Psoas muscle (tissue), 8 donors: ENCODE measurements at regions of chr16 and their contacts with region 1.

Region 1: DNA sequence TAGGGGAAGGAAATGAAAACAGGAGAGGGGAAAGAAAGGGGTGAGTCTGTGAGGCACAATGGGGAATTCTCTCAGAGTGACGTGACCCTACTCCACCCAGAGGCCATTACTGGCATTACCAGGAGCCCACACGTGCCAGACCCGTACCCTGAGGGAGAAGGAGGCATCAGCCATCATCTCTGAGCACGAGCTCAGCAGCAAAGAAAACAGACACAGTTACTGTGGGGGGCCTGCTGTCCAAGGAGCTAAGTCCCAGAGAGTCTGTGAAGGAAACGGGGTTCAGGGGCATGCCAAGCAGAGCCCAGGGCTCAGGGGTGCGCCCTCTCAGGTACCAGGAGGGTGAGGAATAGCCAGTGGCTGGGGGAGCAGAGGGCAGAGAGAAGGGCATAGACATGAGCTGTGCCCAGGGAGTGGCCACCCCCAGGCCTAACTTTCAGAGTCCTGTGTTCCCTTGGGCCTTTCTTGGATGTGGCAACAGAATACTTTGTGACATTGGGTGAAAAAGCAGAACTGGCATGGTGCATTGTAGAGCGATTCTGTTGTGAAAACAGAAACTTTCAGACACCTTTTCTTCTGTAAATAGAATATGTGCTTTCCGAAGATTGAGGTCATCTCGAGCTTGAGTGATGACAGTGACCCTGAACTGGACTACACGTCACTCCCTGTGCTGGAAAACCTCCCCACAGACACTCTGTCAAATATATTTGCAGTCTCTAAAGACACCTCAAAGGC is 11.3 kb downstream of the TAF1C start:
- DNase-seq: peak in 1 of 2 donors; percentile 57
- ATAC-seq: peak; percentile 62 to 88 (median 77)
- H3K4me3 ChIP-seq: no peak overlapping the region
- H3K27ac ChIP-seq: no peak overlapping the region
- H3K4me1 ChIP-seq: peaks cover 10% of the 10 kb centered on the region
- H3K27me3 ChIP-seq: no peaks in the 10 kb centered on the region
- CTCF ChIP-seq: peak; percentile 47

Region 2: DNA sequence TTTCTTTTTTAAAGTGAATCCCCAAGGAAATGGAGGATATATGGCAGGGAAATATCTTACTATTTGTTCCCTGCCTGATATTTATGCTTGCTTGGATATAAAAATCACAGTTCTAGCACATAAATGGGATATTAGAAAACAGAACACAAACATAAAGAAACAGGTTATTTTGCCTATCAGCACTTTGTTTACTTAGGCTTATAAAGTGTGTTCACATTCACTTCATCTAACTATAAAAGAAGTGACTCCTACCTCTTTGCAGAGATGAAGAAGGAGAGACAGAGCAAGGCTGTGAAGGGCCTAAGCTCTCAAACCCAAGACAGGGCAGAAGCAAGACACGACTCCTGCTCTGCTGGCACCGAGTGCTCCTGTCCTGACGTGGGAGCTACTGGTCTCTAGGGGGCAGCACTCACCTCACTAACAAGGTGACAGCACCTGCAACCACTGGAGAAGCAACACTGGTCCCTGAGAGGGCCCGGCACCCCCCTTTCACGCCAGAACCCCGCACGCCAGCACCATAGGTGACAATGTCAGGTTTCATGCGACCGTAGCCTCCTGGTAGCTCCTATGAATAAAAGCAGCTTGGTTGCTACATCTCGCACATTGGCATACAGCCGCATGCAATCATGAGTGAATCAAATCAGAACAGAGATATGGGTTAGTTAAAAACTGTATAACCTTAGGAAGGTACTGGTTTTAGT is 90.8 kb before region 1 on chr16:
- intact Hi-C with region 1: loop called in 1 of 2 experiments (anchors 5 kb)
- DNase-seq: peak; percentile 41 to 72
- ATAC-seq: peak; percentile 59 to 83 (median 72)
- H3K4me3 ChIP-seq: no peak overlapping the region
- H3K27ac ChIP-seq: no peak overlapping the region
- H3K4me1 ChIP-seq: peaks cover 10% of the 10 kb centered on the region
- H3K27me3 ChIP-seq: no peaks in the 10 kb centered on the region
- CTCF ChIP-seq: peak; percentile 65

Region 3: DNA sequence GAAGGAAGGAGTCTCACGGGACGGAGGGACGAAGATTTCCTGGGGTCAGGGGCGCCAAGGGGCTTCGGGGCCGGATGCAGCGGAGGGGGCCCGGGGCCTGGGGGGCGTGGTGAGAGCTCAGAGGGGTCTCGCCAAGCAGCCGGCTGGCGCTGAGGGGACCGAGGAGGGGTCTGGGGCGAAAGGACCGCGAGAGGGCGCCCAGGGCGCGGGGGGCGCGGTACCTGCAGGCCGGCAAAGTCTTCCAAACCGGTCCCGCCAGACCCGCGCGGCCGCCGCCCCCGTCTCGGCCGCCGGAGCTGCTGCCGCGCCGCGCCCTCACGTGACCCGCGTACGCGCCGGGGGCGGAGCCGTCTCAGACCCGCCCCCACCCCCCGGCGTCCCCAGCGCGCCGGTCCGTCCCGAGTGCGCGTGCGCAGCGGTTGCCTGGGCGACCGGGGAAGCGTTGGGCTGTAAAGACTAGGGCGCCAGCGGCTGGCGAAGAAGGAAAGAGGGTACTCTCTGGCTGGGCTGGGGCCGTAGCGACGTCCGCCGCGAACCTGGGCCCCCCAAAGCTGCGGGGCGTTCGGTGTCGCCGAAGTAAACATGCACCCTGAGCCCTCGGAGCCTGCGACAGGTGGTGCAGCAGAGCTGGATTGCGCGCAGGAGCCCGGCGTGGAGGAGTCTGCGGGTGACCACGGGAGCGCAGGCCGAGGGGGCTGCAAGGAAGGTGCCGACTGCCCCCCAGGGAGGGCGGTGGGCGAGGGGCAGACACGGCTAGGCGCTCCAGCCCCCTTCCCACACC is 30.5 kb before region 1 on chr16 and contains the starts of genes DNAAF1 and HSDL1:
- intact Hi-C with region 1: loop called (anchors 2 kb)
- DNase-seq: peak; percentile 92 to 95
- ATAC-seq: peak; percentile 94 to 98 (median 97)
- H3K4me3 ChIP-seq: peak within 1 kb of the TSS; percentile 95
- H3K27ac ChIP-seq: peak within 1 kb of the TSS; percentile 81
- H3K4me1 ChIP-seq: peaks cover 20% of the 10 kb centered on the region
- H3K27me3 ChIP-seq: no peaks in the 10 kb centered on the region
- CTCF ChIP-seq: no peak
- total RNA-seq, gene DNAAF1: not detected
- total RNA-seq, gene HSDL1: 12.4 to 24.4 (median 21.2) TPM

Region 4: GRCh38 chr16:84484579-84485254 is 309.2 kb after region 1 on chr16:
- intact Hi-C with region 1: loop called in 1 of 2 experiments (anchors 10 kb)
- DNase-seq: peak in 1 of 2 donors; percentile 51
- ATAC-seq: peak; percentile 57 to 85 (median 77)
- H3K4me3 ChIP-seq: no peak overlapping the region
- H3K27ac ChIP-seq: no peak overlapping the region
- H3K4me1 ChIP-seq: peaks cover 6% of the 10 kb centered on the region
- H3K27me3 ChIP-seq: no peaks in the 10 kb centered on the region
- CTCF ChIP-seq: peak; percentile 74